Activated CD4-positive, alpha-beta T cell treated with anti-CD3 and anti-CD28 coated beads, Interleukin-2, amount 10 ng/mL, durations not matched to agents 24 days and 14 days (primary cell): ENCODE measurements at regions of chr11 and their contacts with region 1.

Region 1: DNA sequence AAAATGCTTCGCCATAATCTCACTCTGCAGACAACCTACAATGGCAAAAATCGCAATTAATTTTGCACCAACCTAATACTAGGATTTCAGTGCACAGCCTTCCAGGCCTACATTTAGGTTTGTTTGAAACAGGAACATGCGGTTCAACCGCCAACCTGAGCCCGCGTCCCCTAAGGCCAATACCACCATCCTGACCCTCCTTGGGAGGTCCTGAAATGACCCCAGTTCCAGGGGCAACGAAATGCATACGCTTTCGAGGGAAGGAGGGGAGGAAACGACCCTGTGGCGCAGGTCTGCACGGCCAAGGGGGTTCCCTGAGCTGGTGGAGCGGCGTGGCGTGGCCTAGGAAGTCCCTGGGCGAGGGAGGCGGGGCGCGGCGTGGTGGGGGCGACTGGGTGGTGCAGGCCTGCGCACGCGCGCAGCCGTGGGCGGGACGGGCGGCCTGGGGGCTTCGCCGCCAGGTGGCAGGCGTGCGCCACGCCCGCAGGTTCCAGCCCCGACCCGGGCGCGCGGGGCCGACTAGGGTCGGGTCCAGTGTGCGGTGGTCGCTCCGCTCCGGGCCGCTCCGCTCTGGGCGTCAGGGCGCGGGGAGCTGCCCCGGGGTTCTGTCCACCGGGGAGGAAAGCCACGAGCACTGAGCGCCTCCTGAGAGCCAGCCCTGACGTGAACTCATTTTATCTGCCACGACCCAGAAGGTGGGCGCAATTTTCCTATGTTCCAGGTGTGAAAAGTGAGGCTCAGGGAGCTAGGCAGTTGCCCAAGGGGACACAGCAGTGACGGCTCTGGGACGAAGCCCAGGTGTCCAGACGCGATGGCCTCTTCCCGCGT is 94.1 kb downstream of the SWAP70 start:
- DNase-seq: peak; percentile 98
- H3K4me3 Mint-ChIP-seq: peak overlapping the region; percentile 83
- H3K27ac Mint-ChIP-seq: peak overlapping the region; percentile 89
- H3K4me1 Mint-ChIP-seq: peaks cover 56% of the 10 kb centered on the region
- H3K27me3 Mint-ChIP-seq: peaks cover 2% of the 10 kb centered on the region

Region 2: DNA sequence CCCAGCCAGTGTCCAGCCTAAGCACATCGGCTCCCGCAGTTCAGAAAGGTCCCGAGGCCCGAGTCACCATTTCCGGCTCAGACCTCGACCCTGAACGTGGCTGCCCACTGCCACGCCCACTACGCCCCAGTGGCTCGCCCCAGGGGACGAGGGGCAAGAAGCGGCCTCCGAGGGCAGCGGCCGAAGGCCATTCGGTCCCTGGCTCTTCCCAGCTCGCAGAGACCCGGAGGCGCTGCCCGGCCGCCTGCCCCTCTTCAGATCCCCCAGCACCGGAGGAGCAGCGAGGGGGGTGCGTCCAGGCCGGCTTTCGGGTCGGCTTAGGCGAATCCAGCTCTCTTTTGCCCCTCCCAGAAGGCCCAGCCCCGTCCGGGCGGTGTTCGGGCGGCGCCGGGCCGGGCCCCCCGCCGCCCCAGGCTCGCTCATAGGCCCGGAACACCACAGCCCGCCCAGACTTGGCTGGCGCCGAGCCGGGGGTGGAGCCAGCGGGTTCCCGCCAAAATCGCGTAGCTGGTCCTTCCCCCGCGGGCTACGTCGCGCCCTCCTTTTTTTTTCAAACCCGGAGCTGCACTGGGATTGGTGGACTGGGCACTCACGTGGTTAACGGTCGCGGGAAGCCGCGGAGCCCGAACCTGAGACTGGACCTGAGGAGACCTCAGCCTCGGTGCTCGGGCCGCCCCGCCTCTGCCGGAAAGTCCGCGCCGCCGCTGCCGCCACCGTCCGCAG is 184.8 kb before region 1 on chr11 and contains the start of gene WEE1:
- intact Hi-C with region 1: loop called (anchors 2 kb)
- DNase-seq: peak; percentile 100
- H3K4me3 Mint-ChIP-seq: peak within 1 kb of the TSS; percentile 96
- H3K27ac Mint-ChIP-seq: peak within 1 kb of the TSS; percentile 93
- H3K4me1 Mint-ChIP-seq: peaks cover 30% of the 10 kb centered on the region
- H3K27me3 Mint-ChIP-seq: peaks cover 6% of the 10 kb centered on the region
- total RNA-seq, gene WEE1: 55.5 and 57.7 TPM in 2 replicates

Region 3: DNA sequence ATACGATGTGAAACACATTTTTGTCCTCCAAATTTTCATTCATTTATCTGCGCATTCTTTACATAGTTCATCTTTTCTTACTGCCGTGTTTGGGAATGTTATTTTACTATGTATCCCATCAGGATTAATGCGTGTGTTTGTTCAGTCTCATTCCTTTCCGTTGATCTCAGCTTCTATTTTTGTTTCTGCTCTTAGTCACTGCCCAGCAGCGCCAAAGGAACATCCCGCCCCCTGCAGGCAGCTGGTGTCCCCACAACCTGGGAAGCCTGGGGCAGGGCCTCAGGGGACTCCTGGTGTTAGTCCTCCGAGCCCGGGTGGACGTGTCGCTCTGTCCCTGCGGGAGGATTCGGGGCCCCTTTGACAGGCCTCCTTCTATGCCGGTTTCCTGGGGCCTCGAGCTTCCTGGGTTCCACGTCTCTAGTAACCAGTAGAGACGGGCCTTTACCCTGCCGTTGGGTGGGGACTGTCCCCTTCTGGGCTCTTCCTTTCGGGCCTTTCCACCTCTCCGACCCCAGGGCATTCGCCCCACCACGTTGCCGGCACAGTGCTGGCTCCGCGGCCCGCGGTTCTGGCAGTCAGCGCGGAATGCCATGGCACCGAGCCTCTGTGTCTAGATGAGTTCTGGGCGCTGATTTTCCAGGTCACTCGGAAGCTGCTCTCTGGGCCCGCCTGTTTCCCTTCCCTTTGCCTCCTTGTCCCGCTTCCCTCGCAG is 144.7 kb before region 1 on chr11:
- intact Hi-C with region 1: no loop called
- DNase-seq: peak; percentile 96
- H3K4me3 Mint-ChIP-seq: peak overlapping the region; percentile 90
- H3K27ac Mint-ChIP-seq: peak overlapping the region; percentile 98
- H3K4me1 Mint-ChIP-seq: peaks cover 35% of the 10 kb centered on the region
- H3K27me3 Mint-ChIP-seq: no peaks in the 10 kb centered on the region

Region 4: GRCh38 chr11:9815486-9816136 is 57.6 kb after region 1 on chr11:
- intact Hi-C with region 1: no loop called
- DNase-seq: no peak
- H3K4me3 Mint-ChIP-seq: no peak overlapping the region
- H3K27ac Mint-ChIP-seq: no peak overlapping the region
- H3K4me1 Mint-ChIP-seq: no peaks in the 10 kb centered on the region
- H3K27me3 Mint-ChIP-seq: no peaks in the 10 kb centered on the region

Region 5: GRCh38 chr11:9861860-9862725 is 104.1 kb after region 1 on chr11:
- intact Hi-C with region 1: loop called (anchors 1 kb)
- DNase-seq: peak; percentile 84
- H3K4me3 Mint-ChIP-seq: no peak overlapping the region
- H3K27ac Mint-ChIP-seq: peak overlapping the region; percentile 7
- H3K4me1 Mint-ChIP-seq: peaks cover 33% of the 10 kb centered on the region
- H3K27me3 Mint-ChIP-seq: peaks cover 1% of the 10 kb centered on the region

Region 6: GRCh38 chr11:10076458-10077141 is 318.6 kb after region 1 on chr11:
- intact Hi-C with region 1: loop called (anchors 5 kb)
- DNase-seq: peak; percentile 79
- H3K4me3 Mint-ChIP-seq: no peak overlapping the region
- H3K27ac Mint-ChIP-seq: no peak overlapping the region
- H3K4me1 Mint-ChIP-seq: no peaks in the 10 kb centered on the region
- H3K27me3 Mint-ChIP-seq: no peaks in the 10 kb centered on the region

Region 7: GRCh38 chr11:10322830-10323792 is 565.1 kb after region 1 on chr11:
- intact Hi-C with region 1: loop called (anchors 1 kb)
- DNase-seq: peak; percentile 85
- H3K4me3 Mint-ChIP-seq: peak overlapping the region; percentile 62
- H3K27ac Mint-ChIP-seq: peak overlapping the region; percentile 94
- H3K4me1 Mint-ChIP-seq: peaks cover 21% of the 10 kb centered on the region
- H3K27me3 Mint-ChIP-seq: peaks cover 13% of the 10 kb centered on the region